GM10248 (cell line): ENCODE measurements at regions of chr4 and their contacts with region 1.

Region 1: DNA sequence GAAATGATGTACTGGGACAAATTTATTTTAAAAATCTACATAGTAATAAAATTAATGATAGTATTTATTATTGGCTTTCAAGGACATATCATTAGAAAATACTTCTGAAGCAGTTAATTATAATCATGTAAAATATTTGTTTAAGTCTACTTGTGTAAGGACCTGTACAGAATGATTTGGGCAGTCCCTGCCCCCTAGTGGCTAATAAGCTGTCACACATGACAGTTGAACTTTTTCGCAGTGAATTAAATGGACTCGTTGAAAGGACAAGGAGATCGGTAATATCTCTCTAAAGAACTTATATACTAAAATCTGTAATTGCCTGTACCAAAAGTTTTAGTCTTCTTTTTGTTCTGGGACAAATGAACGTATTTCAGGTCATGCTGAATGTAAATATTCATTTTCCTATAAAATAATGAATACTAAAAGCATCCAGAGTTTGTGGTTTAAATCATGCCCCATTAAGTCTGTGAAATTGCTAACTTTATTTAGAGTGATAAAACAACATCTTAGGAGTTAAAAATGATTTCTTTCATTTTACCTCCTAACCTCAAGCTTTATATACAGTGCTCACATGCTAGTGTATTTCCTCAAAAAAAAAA is 13.6 kb downstream of the EXOC1 start:
- DNase-seq: peak; percentile 22
- CTCF ChIP-seq: peak; percentile 80

Region 2: GRCh38 chr4:55853484-55854046 is 13.5 kb before region 1 on chr4 and contains the start of gene EXOC1:
- CTCF ChIA-PET with region 1: interaction called, 43 read pairs
- POLR2A ChIA-PET with region 1: interaction called, 3 read pairs
- DNase-seq: peak; percentile 94
- CTCF ChIP-seq: no peak